Activated CD4-positive, alpha-beta T cell treated with anti-CD3 and anti-CD28 coated beads, Interleukin-2, amount 10 ng/mL, durations not matched to agents 24 days and 14 days (primary cell): ENCODE measurements at regions of chr14 and their contacts with region 1.

Region 1: DNA sequence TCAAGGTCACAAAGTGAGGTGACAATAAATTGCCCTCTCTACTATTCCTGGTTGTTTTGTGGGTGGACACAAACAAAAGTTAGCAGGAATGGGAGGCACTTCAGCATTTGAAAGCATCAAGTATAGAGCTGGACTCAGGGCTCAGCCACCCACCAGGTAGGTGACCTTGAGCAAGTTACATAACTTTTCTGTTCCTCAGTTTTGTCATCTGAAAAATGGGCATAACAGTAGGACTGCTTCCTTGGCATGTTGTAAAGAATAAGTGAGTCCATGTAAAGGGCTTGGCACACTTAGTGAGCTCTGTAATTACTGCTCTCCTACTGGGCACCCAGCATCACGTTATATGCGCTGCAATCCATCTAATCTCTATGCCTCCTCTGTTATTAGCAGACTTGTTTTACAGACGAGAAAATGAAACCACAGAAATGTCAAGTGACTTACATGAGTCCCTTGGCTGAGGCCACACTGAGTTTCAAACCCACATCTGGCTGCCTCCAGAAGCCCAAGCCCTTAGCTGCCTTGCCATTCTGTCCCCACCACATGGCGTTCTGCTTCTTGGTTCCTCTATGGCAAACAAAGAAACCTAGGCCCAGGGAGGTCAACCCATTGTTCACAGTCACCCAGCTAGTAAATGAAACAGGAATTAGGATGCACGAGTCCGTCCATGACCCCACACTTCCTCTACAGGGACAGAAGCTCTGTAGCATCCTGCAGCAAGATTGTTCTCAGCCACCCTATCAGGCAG is 63.2 kb upstream of the SLC24A4 start:
- DNase-seq: peak; percentile 58
- H3K4me3 Mint-ChIP-seq: no peak overlapping the region
- H3K27ac Mint-ChIP-seq: no peak overlapping the region
- H3K4me1 Mint-ChIP-seq: peaks cover 15% of the 10 kb centered on the region
- H3K27me3 Mint-ChIP-seq: peaks cover 23% of the 10 kb centered on the region

Region 2: GRCh38 chr14:92280554-92281262 is 20.9 kb after region 1 on chr14:
- intact Hi-C with region 1: loop called (anchors 2 kb)
- DNase-seq: peak; percentile 80
- H3K4me3 Mint-ChIP-seq: peak overlapping the region; percentile 53
- H3K27ac Mint-ChIP-seq: peak overlapping the region; percentile 56
- H3K4me1 Mint-ChIP-seq: peaks cover 22% of the 10 kb centered on the region
- H3K27me3 Mint-ChIP-seq: peaks cover 2% of the 10 kb centered on the region

Region 3: DNA sequence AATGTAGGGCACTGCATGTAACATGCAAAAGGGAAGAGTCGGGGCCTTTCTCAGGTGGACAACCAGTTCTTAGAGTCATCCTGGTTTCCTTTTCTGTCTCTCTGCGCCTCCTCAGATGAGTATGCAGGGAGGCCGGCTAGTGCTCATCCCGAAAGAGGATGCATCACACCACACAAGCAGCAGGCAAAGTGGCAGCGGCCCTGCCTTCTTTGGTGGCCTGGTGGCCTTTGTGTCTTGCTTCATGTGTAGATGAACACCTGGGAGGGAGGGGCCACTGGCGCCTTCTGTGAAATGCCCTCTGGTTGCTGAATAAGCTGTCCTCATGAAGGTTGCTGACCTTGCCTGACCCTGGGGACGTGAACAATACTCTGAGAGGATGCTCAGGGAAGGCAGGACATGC is 81.1 kb after region 1 on chr14:
- intact Hi-C with region 1: loop called (anchors 2 kb)
- DNase-seq: peak; percentile 56
- H3K4me3 Mint-ChIP-seq: peak overlapping the region; percentile 21
- H3K27ac Mint-ChIP-seq: peak overlapping the region; percentile 10
- H3K4me1 Mint-ChIP-seq: peaks cover 15% of the 10 kb centered on the region
- H3K27me3 Mint-ChIP-seq: peaks cover 56% of the 10 kb centered on the region